AG04449 (cell line): ENCODE measurements at regions of chr3 and their contacts with region 1.

Region 1: GRCh38 chr3:185280572-185281365 is 26.9 kb upstream of the EHHADH start:
- DNase-seq: no peak
- H3K4me3 ChIP-seq: no peak overlapping the region
- CTCF ChIP-seq: peak; percentile 68

Region 2: GRCh38 chr3:185164428-185165217 is 116.1 kb before region 1 on chr3:
- CTCF ChIA-PET with region 1: no interaction called
- POLR2A ChIA-PET with region 1: no interaction called
- DNase-seq: no peak
- H3K4me3 ChIP-seq: no peak overlapping the region
- CTCF ChIP-seq: no peak

Region 3: DNA sequence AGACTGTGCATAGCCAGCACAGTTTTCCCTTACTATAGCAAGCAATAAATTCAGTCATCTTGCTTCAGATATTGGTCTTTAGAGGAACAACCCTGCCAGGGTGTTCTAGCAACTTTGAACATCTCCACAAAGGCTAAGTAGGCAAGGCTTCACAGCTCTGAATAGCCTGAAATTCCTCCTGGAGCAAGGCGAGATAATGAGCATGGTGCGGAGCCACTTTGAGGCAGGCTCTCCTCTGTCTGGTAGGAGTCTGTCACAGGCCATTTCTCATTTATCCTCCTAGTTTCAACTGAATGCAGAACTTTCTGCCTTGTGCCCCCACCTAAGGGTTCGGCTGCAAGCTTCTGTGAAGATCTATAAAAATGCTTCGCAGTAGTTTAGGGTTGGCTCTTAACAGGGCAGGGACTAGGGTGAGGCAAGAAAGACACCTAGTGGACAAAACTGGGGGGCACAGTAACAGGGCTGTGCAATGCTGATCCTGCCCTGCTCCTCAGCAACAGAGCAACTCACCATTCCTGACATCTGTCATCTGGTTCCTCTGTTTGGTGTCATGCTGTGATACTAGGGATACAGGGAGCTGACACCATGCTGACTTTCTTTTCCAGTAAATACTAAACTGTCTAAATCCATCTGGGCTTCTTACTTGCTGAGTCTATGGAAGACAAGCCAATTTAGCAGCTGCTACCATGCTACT is 10.4 kb before region 1 on chr3:
- CTCF ChIA-PET with region 1: interaction called, 29 read pairs
- POLR2A ChIA-PET with region 1: no interaction called
- DNase-seq: no peak
- H3K4me3 ChIP-seq: no peak overlapping the region
- CTCF ChIP-seq: peak; percentile 64